Activated CD8-positive, alpha-beta memory T cell treated with anti-CD3 and anti-CD28 coated beads, Interleukin-2, amount 10 ng/mL, durations not matched to agents 7 days and 5 days (primary cell): ENCODE measurements at regions of chr12 and their contacts with region 1.

Region 1: GRCh38 chr12:64696080-64696741 is 63.0 kb downstream of the GNS start:
- DNase-seq: no peak
- ATAC-seq: no peak
- H3K4me3 Mint-ChIP-seq: no peak overlapping the region
- H3K27ac Mint-ChIP-seq: no peak overlapping the region
- H3K4me1 Mint-ChIP-seq: peaks cover 43% of the 10 kb centered on the region
- H3K27me3 Mint-ChIP-seq: no peaks in the 10 kb centered on the region

Region 2: GRCh38 chr12:64544371-64545080 is 151.7 kb before region 1 on chr12:
- CTCF ChIA-PET with region 1: interaction called, 113 read pairs
- DNase-seq: no peak
- ATAC-seq: no peak
- H3K4me3 Mint-ChIP-seq: no peak overlapping the region
- H3K27ac Mint-ChIP-seq: no peak overlapping the region
- H3K4me1 Mint-ChIP-seq: no peaks in the 10 kb centered on the region
- H3K27me3 Mint-ChIP-seq: peaks cover 9% of the 10 kb centered on the region

Region 3: GRCh38 chr12:64550755-64551154 is 145.5 kb before region 1 on chr12:
- CTCF ChIA-PET with region 1: interaction called, 113 read pairs
- DNase-seq: no peak
- ATAC-seq: no peak
- H3K4me3 Mint-ChIP-seq: no peak overlapping the region
- H3K27ac Mint-ChIP-seq: no peak overlapping the region
- H3K4me1 Mint-ChIP-seq: peaks cover 2% of the 10 kb centered on the region
- H3K27me3 Mint-ChIP-seq: no peaks in the 10 kb centered on the region

Region 4: DNA sequence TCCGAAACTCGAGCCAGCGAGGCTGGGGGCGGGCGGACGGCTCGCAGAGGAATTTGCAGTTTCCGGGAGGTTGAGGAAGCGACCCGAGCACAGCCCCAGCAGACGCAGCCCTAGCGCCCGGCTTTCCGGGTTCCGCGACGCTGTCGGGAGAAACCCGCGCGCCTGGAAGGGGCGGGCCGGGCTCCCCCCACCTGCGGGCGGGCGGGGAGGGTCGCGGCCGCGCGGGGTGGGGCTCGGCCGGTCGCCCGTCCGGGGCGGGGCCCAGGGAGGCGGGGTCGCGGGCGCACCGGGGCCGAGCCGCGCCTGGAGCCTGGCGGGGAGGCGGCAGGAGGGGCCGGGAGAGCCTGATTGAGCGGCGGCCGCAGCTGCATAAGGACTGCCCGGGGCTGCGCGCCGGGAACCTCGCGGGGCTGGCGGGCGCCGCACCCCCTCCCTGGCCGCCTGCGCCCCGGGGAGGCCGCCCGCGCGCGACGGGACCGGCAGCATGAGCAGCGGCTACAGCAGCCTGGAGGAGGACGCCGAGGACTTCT is 86.0 kb before region 1 on chr12 and contains the start of gene RASSF3:
- CTCF ChIA-PET with region 1: interaction called, 22 read pairs
- DNase-seq: peak; percentile 88
- ATAC-seq: peak; percentile 71
- H3K4me3 Mint-ChIP-seq: peak within 1 kb of the TSS; percentile 84
- H3K27ac Mint-ChIP-seq: peak within 1 kb of the TSS; percentile 96
- H3K4me1 Mint-ChIP-seq: peaks cover 39% of the 10 kb centered on the region
- H3K27me3 Mint-ChIP-seq: no peaks in the 10 kb centered on the region
- total RNA-seq, gene RASSF3: 45.5 to 61.5 TPM

Region 5: GRCh38 chr12:64669270-64669842 is 26.9 kb before region 1 on chr12:
- CTCF ChIA-PET with region 1: interaction called, 16 read pairs
- DNase-seq: peak; percentile 70
- ATAC-seq: peak; percentile 87
- H3K4me3 Mint-ChIP-seq: peak overlapping the region; percentile 88
- H3K27ac Mint-ChIP-seq: peak overlapping the region; percentile 100
- H3K4me1 Mint-ChIP-seq: peaks cover 87% of the 10 kb centered on the region
- H3K27me3 Mint-ChIP-seq: no peaks in the 10 kb centered on the region

Region 6: DNA sequence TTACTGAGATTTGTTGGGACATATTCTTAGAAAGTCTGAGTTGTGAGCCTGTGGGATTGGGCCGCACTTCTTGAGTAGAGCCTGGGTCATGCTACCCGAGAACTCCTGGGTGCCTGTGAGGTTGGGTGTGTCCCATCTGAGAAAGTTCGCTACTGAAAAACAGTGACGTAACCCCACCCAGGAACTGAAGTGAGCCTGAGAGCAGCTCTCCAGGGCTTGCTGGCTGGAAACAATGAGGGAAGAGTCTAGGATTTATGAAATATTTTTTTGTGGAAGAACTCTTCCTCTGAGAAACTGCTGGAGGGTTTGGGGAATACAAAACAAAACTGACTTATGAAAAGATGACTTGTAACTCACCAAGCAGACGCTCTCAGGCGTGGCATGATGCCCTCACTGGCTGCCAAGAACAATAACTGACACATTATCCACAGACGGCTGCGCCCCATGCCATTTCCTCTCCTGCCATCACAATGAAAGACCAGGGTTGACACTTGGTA is 16.7 kb before region 1 on chr12:
- CTCF ChIA-PET with region 1: interaction called, 18 read pairs
- DNase-seq: peak; percentile 78
- ATAC-seq: peak; percentile 68
- H3K4me3 Mint-ChIP-seq: peak overlapping the region; percentile 66
- H3K27ac Mint-ChIP-seq: peak overlapping the region; percentile 97
- H3K4me1 Mint-ChIP-seq: peaks cover 93% of the 10 kb centered on the region
- H3K27me3 Mint-ChIP-seq: no peaks in the 10 kb centered on the region

Region 7: GRCh38 chr12:64706306-64706705 is 10.1 kb after region 1 on chr12:
- CTCF ChIA-PET with region 1: interaction called, 17 read pairs
- DNase-seq: no peak
- ATAC-seq: no peak
- H3K4me3 Mint-ChIP-seq: no peak overlapping the region
- H3K27ac Mint-ChIP-seq: no peak overlapping the region
- H3K4me1 Mint-ChIP-seq: peaks cover 1% of the 10 kb centered on the region
- H3K27me3 Mint-ChIP-seq: no peaks in the 10 kb centered on the region

Region 8: DNA sequence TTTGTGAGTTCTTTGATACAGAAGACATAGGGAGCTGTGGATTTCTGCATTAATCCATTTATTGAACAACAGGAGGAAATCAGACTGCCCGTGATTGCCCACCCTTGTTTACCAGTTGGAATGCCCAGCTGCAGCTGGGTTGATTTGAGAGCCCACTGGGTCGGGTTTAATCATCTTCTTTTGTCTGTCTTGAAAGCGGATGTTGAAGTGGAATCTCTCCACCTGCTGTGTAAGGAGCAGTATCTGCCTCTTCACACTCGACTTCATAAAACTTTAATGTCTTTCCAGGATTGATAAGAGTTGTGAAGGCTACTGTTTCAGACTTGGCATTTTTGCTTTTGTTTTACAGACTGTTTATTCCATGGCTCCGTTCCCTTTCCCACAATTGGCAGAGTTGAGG is 168.1 kb after region 1 on chr12:
- CTCF ChIA-PET with region 1: no interaction called
- DNase-seq: no peak
- ATAC-seq: no peak
- H3K4me3 Mint-ChIP-seq: no peak overlapping the region
- H3K27ac Mint-ChIP-seq: no peak overlapping the region
- H3K4me1 Mint-ChIP-seq: no peaks in the 10 kb centered on the region
- H3K27me3 Mint-ChIP-seq: peaks cover 42% of the 10 kb centered on the region